ENCODE measurements at regions of chr10 and their contacts with region 1.

Region 1: DNA sequence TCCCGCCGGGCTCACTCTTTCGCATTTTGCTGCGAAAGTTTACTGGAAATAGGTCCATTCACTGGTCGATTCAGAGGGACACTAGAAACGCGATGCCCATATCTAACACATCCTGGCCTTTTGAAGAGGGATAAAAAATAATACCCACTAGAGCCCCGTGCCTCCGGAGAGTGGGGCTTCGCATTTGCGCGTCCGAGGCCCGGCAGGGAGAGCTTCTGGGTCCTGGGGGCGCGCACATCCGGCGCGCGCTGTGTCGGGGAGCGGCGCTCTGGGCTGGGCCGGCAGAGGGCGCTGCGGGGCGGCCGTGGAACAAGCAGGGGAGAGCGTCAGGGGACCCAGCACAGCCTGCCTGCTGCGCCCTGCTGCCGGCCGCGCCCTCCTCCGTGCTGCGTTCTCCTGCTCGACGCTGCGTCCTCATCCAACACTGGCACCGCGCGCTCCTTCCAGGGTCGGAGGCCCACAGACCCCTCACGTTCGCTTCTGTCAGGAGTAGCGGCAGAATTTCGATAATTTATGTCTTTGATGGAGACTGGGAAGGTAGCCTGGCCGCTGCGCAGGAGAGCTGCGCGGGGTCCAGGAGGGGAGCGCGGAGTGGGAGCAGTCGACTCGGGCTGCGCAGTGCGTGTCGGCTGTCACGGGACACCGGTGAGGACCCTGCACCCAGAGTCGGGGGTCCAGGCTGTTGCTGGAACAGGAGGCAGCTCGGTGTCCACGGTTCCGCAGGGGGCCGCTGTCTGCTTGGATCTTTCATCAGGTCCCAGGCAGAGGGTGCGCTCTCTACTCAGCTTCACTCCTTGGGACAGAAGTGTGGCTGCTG is 41.5 kb upstream of the ZNF32 start:
- DNase-seq: peak; percentile 87
- H3K4me3 Mint-ChIP-seq: peak overlapping the region; percentile 77
- H3K27ac Mint-ChIP-seq: no peak overlapping the region
- H3K4me1 Mint-ChIP-seq: peaks cover 5% of the 10 kb centered on the region
- H3K27me3 Mint-ChIP-seq: peaks cover 12% of the 10 kb centered on the region

Region 2: DNA sequence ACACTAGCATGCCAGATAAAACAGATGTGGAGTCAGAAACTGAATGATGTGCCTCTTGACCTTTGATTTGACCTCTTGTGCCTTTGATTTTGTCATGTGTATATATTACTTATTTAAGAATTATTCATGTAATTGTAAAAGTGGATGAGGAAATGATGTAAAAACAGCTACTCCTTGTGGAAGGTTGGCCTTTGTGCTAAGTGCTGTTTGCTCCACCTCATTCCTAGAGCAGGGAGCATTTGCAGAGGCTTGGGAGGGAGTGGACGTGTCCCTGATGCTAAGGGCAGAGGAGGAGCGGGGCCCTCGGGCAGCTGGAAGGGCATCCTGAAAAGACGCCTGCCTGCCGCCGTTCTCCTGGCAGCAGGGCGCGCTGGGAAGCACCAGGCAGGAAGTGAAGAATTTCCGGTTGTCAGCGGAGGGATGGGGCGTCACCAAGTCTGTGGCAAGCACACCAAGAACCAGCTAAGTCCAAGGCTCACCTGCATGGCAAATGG is 156.1 kb after region 1 on chr10:
- CTCF ChIA-PET with region 1: interaction called, 11 read pairs
- intact Hi-C with region 1: no loop called
- DNase-seq: peak; percentile 74
- H3K4me3 Mint-ChIP-seq: peak overlapping the region; percentile 58
- H3K27ac Mint-ChIP-seq: peak overlapping the region; percentile 74
- H3K4me1 Mint-ChIP-seq: peaks cover 18% of the 10 kb centered on the region
- H3K27me3 Mint-ChIP-seq: no peaks in the 10 kb centered on the region

Region 3: DNA sequence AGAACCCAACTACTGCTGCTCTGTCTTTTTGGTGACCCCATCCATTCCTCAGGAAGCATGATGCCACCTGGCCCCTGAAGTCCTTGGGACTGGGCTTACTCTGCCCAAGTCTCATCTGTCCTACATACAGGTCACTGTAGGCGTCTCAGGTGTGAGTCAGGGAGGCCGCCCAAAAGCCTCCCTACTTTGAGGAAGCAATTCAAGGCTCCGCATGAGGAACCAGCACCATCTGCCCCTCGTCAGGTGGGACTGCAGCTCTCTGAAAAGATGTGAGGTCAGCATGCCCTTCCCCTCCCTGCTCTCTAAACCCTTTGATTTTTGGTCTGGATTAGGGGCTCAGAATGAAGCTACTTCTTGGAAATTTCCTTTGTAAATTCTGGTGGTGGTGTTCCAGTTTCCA is 340.0 kb after region 1 on chr10:
- CTCF ChIA-PET with region 1: interaction called, 8 read pairs
- intact Hi-C with region 1: loop called (anchors 1 kb)
- DNase-seq: peak; percentile 51
- H3K4me3 Mint-ChIP-seq: no peak overlapping the region
- H3K27ac Mint-ChIP-seq: no peak overlapping the region
- H3K4me1 Mint-ChIP-seq: no peaks in the 10 kb centered on the region
- H3K27me3 Mint-ChIP-seq: no peaks in the 10 kb centered on the region

Region 4: GRCh38 chr10:44310762-44311562 is 620.8 kb after region 1 on chr10:
- CTCF ChIA-PET with region 1: interaction called, 3 read pairs
- intact Hi-C with region 1: loop called (anchors 1 kb)
- DNase-seq: peak; percentile 76
- H3K4me3 Mint-ChIP-seq: no peak overlapping the region
- H3K27ac Mint-ChIP-seq: no peak overlapping the region
- H3K4me1 Mint-ChIP-seq: peaks cover 8% of the 10 kb centered on the region
- H3K27me3 Mint-ChIP-seq: peaks cover 13% of the 10 kb centered on the region

Region 5: GRCh38 chr10:44386546-44387052 is 696.4 kb after region 1 on chr10:
- CTCF ChIA-PET with region 1: no interaction called
- intact Hi-C with region 1: loop called (anchors 1 kb)
- DNase-seq: peak; percentile 22
- H3K4me3 Mint-ChIP-seq: no peak overlapping the region
- H3K27ac Mint-ChIP-seq: no peak overlapping the region
- H3K4me1 Mint-ChIP-seq: peaks cover 4% of the 10 kb centered on the region
- H3K27me3 Mint-ChIP-seq: peaks cover 28% of the 10 kb centered on the region

Region 6: GRCh38 chr10:44857363-44858016 is 1167.3 kb after region 1 on chr10:
- CTCF ChIA-PET with region 1: interaction called, 3 read pairs
- intact Hi-C with region 1: loop called (anchors 5 kb)
- DNase-seq: peak; percentile 76
- H3K4me3 Mint-ChIP-seq: no peak overlapping the region
- H3K27ac Mint-ChIP-seq: no peak overlapping the region
- H3K4me1 Mint-ChIP-seq: no peaks in the 10 kb centered on the region
- H3K27me3 Mint-ChIP-seq: peaks cover 3% of the 10 kb centered on the region

Measured in activated naive CD4-positive, alpha-beta T cell treated with anti-CD3 and anti-CD28 coated beads for 36 hours (primary cell).